ENCODE measurements at regions of chr15 and their contacts with region 1.

Region 1: GRCh38 chr15:33067941-33068481 is 126.5 kb downstream of the FMN1 start:
- DNase-seq: peak; percentile 71
- ATAC-seq: peak; percentile 68
- H3K4me3 ChIP-seq: peak overlapping the region; percentile 43
- H3K27ac ChIP-seq: peak overlapping the region; percentile 95
- H3K4me1 ChIP-seq: peaks cover 48% of the 10 kb centered on the region
- H3K27me3 ChIP-seq: no peaks in the 10 kb centered on the region
- CTCF ChIP-seq: no peak

Region 2: GRCh38 chr15:32743411-32744140 is 324.4 kb before region 1 on chr15:
- CTCF ChIA-PET with region 1: no interaction called
- POLR2A ChIA-PET with region 1: no interaction called
- intact Hi-C with region 1: no loop called
- DNase-seq: peak; percentile 29
- ATAC-seq: no peak
- H3K4me3 ChIP-seq: no peak overlapping the region
- H3K27ac ChIP-seq: no peak overlapping the region
- H3K4me1 ChIP-seq: no peaks in the 10 kb centered on the region
- H3K27me3 ChIP-seq: no peaks in the 10 kb centered on the region
- CTCF ChIP-seq: no peak

Region 3: GRCh38 chr15:33031324-33031821 is 36.6 kb before region 1 on chr15:
- CTCF ChIA-PET with region 1: no interaction called
- POLR2A ChIA-PET with region 1: no interaction called
- intact Hi-C with region 1: loop called (anchors 1 kb)
- DNase-seq: peak; percentile 50
- ATAC-seq: peak; percentile 77
- H3K4me3 ChIP-seq: no peak overlapping the region
- H3K27ac ChIP-seq: peak overlapping the region; percentile 26
- H3K4me1 ChIP-seq: peaks cover 32% of the 10 kb centered on the region
- H3K27me3 ChIP-seq: no peaks in the 10 kb centered on the region
- CTCF ChIP-seq: no peak

Region 4: DNA sequence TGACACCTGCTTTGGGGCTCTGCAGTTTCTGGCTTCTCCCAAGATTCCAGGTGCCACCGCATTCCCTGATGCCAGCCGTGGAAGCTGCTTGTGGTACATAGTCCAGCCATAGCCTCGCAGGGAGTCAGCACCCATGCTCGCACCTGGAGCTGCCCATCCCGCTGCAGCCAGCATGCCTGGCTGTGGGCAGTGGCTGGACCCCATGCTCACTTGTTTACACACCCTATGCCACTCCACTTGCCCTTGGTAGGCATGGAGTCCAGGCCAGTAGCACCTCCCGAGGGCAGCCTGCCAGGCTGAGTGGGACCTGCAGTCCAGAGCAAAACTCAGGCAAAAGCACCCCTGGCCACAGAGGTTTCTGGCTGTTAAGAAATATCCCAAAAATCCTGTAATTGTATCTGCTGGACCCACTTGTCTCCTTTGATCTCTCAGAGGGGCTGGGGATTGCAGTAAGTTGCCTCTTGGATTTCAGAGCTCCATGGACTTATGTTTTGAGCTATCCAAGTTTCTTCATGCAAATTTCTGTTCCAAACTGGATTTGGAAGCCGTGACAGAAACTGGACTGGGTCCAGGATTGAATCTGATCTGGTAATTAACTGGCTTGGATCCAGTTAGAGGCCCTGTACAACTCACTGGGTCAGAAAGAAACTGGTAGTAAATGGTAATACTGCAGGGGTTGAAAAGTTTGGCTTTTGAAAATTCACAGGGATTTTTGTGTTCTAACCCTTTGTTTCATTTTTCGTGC is 22.8 kb before region 1 on chr15:
- CTCF ChIA-PET with region 1: no interaction called
- POLR2A ChIA-PET with region 1: no interaction called
- intact Hi-C with region 1: no loop called
- DNase-seq: no peak
- ATAC-seq: no peak
- H3K4me3 ChIP-seq: no peak overlapping the region
- H3K27ac ChIP-seq: no peak overlapping the region
- H3K4me1 ChIP-seq: no peaks in the 10 kb centered on the region
- H3K27me3 ChIP-seq: no peaks in the 10 kb centered on the region
- CTCF ChIP-seq: no peak

Region 5: GRCh38 chr15:33104212-33104611 is 36.2 kb after region 1 on chr15:
- CTCF ChIA-PET with region 1: no interaction called
- POLR2A ChIA-PET with region 1: no interaction called
- intact Hi-C with region 1: loop called (anchors 2 kb)
- DNase-seq: peak; percentile 91
- ATAC-seq: peak; percentile 97
- H3K4me3 ChIP-seq: peak overlapping the region; percentile 30; the same call in 1 of the 2 replicates
- H3K27ac ChIP-seq: peak overlapping the region; percentile 86
- H3K4me1 ChIP-seq: peaks cover 44% of the 10 kb centered on the region
- H3K27me3 ChIP-seq: no peaks in the 10 kb centered on the region
- CTCF ChIP-seq: no peak

Region 6: DNA sequence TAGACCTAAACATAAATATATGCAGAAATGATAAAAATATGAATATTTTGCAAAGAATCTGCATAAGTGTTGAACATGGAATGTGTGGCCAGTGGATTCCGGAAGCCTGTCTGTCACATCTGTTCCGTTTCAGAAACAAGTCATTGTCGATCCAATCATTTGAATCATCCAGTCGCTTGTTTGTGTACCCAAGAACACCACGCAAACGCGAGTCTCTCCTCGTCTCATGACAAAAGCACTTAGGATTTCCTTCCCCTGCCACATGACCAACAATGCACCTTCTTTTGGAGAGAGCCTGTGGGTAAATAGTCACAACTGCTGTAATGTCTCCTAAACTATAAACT is 46.3 kb after region 1 on chr15:
- CTCF ChIA-PET with region 1: no interaction called
- POLR2A ChIA-PET with region 1: no interaction called
- intact Hi-C with region 1: no loop called
- DNase-seq: no peak
- ATAC-seq: no peak
- H3K4me3 ChIP-seq: no peak overlapping the region
- H3K27ac ChIP-seq: no peak overlapping the region
- H3K4me1 ChIP-seq: peaks cover 41% of the 10 kb centered on the region
- H3K27me3 ChIP-seq: no peaks in the 10 kb centered on the region
- CTCF ChIP-seq: no peak

Region 7: DNA sequence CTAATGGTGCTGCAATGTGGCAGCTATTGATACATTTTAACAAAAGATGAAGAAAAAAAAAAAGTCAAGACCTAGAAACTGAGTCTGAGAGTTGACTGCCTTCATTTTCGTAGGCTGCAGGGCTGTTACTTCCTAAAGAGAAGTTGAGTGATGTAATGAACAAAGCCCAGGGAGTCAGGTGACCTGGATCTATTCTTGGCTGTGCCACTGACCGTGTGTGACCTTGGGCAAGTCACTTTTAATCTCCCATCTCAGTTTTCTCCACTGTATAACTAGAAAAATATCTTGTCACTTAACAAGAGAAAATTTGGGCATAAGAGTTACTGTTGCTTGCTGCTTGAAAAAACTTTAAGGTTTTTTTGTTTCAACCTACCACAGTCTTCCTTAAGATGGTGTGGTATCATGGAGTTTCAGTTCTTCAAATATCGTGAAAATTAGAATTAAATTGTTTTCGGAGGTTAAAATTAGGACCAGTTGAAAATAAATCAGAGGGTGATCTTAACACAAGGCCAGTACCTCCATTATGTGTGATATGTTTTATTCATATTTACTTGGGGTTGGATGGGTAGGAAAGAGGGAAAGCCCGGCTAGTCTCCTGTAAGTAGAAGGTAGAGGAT is 120.7 kb after region 1 on chr15:
- CTCF ChIA-PET with region 1: no interaction called
- POLR2A ChIA-PET with region 1: no interaction called
- intact Hi-C with region 1: no loop called
- DNase-seq: no peak
- ATAC-seq: no peak
- H3K4me3 ChIP-seq: no peak overlapping the region
- H3K27ac ChIP-seq: no peak overlapping the region
- H3K4me1 ChIP-seq: no peaks in the 10 kb centered on the region
- H3K27me3 ChIP-seq: peaks cover 22% of the 10 kb centered on the region; the same call in 1 of the 2 replicates
- CTCF ChIP-seq: no peak